ENCODE measurements at regions of chrX and their contacts with region 1.

Region 1: GRCh38 chrX:13327671-13328070 is 7.8 kb upstream of the ATXN3L start:
- DNase-seq: no peak
- ATAC-seq: no peak
- H3K4me3 ChIP-seq: no peak overlapping the region
- H3K27ac ChIP-seq: no peak overlapping the region
- H3K4me1 ChIP-seq: no peaks in the 10 kb centered on the region
- H3K27me3 ChIP-seq: peaks cover 0 to 23% (median 0%) of the 10 kb centered on the region in 7 donors
- CTCF ChIP-seq: no peak

Region 2: GRCh38 chrX:13239272-13239671 is 88.4 kb before region 1 on chrX:
- intact Hi-C with region 1: no loop called
- DNase-seq: no peak
- ATAC-seq: peak in 1 of 8 donors; percentile 56
- H3K4me3 ChIP-seq: no peak overlapping the region
- H3K27ac ChIP-seq: peak overlapping the region in 1 of 10 donors; percentile 10
- H3K4me1 ChIP-seq: no peaks in the 10 kb centered on the region
- H3K27me3 ChIP-seq: peaks cover 0 to 61% (median 0%) of the 10 kb centered on the region in 7 donors
- CTCF ChIP-seq: no peak

Region 3: GRCh38 chrX:13266641-13267345 is 60.9 kb before region 1 on chrX:
- intact Hi-C with region 1: no loop called
- DNase-seq: no peak
- ATAC-seq: no peak
- H3K4me3 ChIP-seq: no peak overlapping the region
- H3K27ac ChIP-seq: no peak overlapping the region
- H3K4me1 ChIP-seq: no peaks in the 10 kb centered on the region
- H3K27me3 ChIP-seq: peaks cover 0 to 18% (median 0%) of the 10 kb centered on the region in 7 donors
- CTCF ChIP-seq: no peak

Region 4: GRCh38 chrX:13305108-13305507 is 22.6 kb before region 1 on chrX:
- intact Hi-C with region 1: loop called in 1 of 10 experiments (anchors 2 kb)
- DNase-seq: no peak
- ATAC-seq: no peak
- H3K4me3 ChIP-seq: no peak overlapping the region
- H3K27ac ChIP-seq: peak overlapping the region in 1 of 10 donors; percentile 31
- H3K4me1 ChIP-seq: no peaks in the 10 kb centered on the region
- H3K27me3 ChIP-seq: peaks cover 0 to 66% (median 0%) of the 10 kb centered on the region in 7 donors
- CTCF ChIP-seq: no peak

Measured in heart right ventricle (tissue), 16 donors.